Activated CD8-positive, alpha-beta T cell treated with anti-CD3 and anti-CD28 coated beads, Interleukin-2, amount 10 ng/mL, durations not matched to agents 7 days and 5 days (primary cell): ENCODE measurements at regions of chr11 and their contacts with region 1.

Region 1: GRCh38 chr11:119323538-119324033 is 6.7 kb upstream of the MCAM start:
- DNase-seq: peak; percentile 87
- ATAC-seq: no peak
- H3K4me3 Mint-ChIP-seq: no peak overlapping the region
- H3K27ac Mint-ChIP-seq: no peak overlapping the region
- H3K4me1 Mint-ChIP-seq: peaks cover 28% of the 10 kb centered on the region
- H3K27me3 Mint-ChIP-seq: peaks cover 6% of the 10 kb centered on the region

Region 2: DNA sequence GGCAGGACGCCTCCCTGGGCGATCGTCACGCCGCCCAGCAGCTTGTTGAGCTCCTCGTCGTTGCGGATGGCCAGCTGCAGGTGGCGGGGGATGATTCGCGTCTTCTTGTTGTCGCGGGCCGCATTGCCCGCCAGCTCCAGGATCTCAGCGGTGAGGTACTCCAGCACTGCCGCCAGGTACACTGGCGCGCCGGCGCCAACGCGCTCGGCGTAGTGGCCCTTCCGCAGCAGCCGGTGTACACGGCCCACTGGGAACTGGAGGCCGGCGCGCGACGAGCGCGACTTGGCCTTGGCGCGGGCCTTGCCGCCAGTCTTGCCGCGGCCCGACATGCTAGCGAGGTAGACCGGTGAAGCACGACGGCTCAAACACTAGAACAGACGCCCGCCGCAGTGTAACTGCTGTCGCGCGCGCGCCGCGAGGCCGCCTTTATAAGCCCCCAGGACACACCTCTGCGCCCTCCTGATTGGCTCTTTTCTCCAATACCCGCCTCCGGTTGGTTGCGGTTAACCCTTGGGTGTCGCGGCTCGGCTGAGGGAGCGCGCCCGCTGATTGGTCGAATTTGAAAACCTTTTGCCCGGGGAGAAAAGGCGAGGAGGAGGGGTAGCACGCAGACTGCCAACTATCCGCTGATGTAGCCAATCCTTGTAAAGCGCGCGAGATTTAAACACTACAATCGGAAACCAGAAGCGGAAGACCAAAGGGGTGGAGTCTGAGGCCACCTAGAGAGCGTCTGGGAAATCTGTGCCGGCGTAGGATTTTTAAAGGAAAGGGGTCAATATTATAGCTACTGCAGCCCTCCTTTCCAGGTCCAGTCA is 228.3 kb before region 1 on chr11:
- CTCF ChIA-PET with region 1: interaction called, 5 read pairs
- POLR2A ChIA-PET with region 1: interaction called, 20 read pairs
- DNase-seq: peak; percentile 100
- ATAC-seq: peak; percentile 81
- H3K4me3 Mint-ChIP-seq: peak overlapping the region; percentile 95
- H3K27ac Mint-ChIP-seq: peak overlapping the region; percentile 97
- H3K4me1 Mint-ChIP-seq: peaks cover 59% of the 10 kb centered on the region
- H3K27me3 Mint-ChIP-seq: no peaks in the 10 kb centered on the region

Region 3: GRCh38 chr11:119196833-119197483 is 126.6 kb before region 1 on chr11:
- CTCF ChIA-PET with region 1: interaction called, 93 read pairs
- POLR2A ChIA-PET with region 1: no interaction called
- DNase-seq: peak; percentile 85
- ATAC-seq: peak; percentile 96
- H3K4me3 Mint-ChIP-seq: no peak overlapping the region
- H3K27ac Mint-ChIP-seq: no peak overlapping the region
- H3K4me1 Mint-ChIP-seq: peaks cover 4% of the 10 kb centered on the region
- H3K27me3 Mint-ChIP-seq: peaks cover 3% of the 10 kb centered on the region

Region 4: DNA sequence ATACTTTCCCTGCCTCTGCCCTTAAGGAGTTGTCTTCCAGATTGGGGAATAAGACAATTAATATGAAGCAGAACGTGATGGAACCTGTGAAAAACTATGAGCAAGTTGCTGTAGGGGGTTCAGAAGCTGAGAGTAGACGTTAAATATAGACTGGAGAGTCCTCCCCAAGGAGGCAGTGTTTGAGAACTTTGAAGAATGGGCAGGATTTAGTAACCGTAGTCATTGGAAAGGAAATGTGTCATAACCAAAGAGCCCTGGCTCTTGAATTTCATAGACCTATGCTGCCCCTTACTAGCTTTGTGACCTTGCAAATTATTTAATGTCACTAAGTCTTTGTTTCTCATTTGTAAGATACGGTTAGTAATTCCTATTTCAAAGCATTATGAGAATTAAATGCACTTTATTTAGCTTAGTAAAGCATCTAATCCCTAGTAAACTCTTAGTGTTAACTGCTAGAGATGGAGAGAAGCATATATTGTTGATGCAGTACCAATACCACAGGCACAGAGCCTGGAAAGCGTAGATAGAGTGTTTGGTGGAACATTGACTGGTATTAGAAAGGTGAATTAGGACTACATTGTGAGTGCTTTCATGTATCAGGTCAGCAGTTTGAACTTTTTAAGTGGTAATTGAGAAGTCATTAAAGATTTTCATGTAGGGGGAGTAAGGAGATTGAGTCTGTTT is 60.8 kb before region 1 on chr11:
- CTCF ChIA-PET with region 1: interaction called, 66 read pairs
- POLR2A ChIA-PET with region 1: interaction called, 7 read pairs
- DNase-seq: peak; percentile 47
- ATAC-seq: peak; percentile 63
- H3K4me3 Mint-ChIP-seq: no peak overlapping the region
- H3K27ac Mint-ChIP-seq: no peak overlapping the region
- H3K4me1 Mint-ChIP-seq: peaks cover 50% of the 10 kb centered on the region
- H3K27me3 Mint-ChIP-seq: no peaks in the 10 kb centered on the region

Region 5: GRCh38 chr11:119300198-119300964 is 23.2 kb before region 1 on chr11:
- CTCF ChIA-PET with region 1: interaction called, 58 read pairs
- POLR2A ChIA-PET with region 1: interaction called, 7 read pairs
- DNase-seq: no peak
- ATAC-seq: no peak
- H3K4me3 Mint-ChIP-seq: no peak overlapping the region
- H3K27ac Mint-ChIP-seq: no peak overlapping the region
- H3K4me1 Mint-ChIP-seq: peaks cover 7% of the 10 kb centered on the region
- H3K27me3 Mint-ChIP-seq: no peaks in the 10 kb centered on the region

Region 6: DNA sequence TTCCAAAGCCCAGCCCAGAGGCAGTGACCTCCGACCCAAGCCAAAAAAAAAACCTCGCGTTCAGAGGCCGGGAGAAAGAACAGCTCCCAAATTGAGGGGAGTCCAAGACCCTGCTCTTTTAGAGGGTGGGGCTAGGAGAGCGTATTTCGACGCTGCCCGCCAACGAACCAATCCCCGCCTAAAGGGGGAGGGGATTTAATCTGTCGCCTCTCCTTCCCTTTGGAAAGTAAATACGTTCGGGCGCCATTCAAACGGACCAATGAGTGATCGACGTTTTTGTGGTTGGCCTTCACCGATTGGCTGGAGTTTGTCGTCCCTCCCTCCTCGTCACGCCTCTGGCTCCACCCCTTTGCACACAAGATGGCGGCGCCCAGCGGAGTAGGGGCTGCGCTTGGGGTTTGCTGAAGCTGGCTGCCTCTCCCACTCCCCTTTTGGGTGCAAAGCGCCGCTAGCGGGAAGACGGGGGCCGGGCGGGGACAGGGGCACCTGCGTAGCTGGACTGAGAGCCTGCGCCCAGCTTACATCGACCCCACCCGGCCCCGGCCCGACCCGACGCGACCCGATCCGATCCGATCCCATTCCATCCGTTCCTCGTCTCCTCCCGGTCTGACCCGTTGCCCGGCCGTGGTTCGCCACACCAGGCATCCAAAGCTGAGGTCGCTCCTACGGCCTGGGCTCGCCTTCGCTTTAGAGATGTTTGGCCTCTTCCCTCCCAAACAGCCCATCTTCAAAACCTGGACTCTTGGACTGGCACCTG is 10.8 kb after region 1 on chr11 and contains the start of gene RNF26:
- CTCF ChIA-PET with region 1: interaction called, 96 read pairs
- POLR2A ChIA-PET with region 1: interaction called, 13 read pairs
- DNase-seq: peak; percentile 98
- ATAC-seq: peak; percentile 96
- H3K4me3 Mint-ChIP-seq: peak within 1 kb of the TSS; percentile 92
- H3K27ac Mint-ChIP-seq: peak within 1 kb of the TSS; percentile 96
- H3K4me1 Mint-ChIP-seq: peaks cover 60% of the 10 kb centered on the region
- H3K27me3 Mint-ChIP-seq: peaks cover 20% of the 10 kb centered on the region
- total RNA-seq, gene RNF26: 40.5 to 41.8 TPM